PC-3 (cell line): ENCODE measurements at regions of chr5 and their contacts with region 1.

Region 1: GRCh38 chr5:104265531-104266140 is 703.0 kb upstream of the NUDT12 start:
- DNase-seq: no peak
- ATAC-seq: peak; percentile 18; the same call in 1 of the 2 replicates
- H3K4me3 ChIP-seq: no peak overlapping the region
- H3K27ac ChIP-seq: no peak overlapping the region
- H3K4me1 ChIP-seq: no peaks in the 10 kb centered on the region
- H3K27me3 ChIP-seq: no peaks in the 10 kb centered on the region
- CTCF ChIP-seq: no peak

Region 2: DNA sequence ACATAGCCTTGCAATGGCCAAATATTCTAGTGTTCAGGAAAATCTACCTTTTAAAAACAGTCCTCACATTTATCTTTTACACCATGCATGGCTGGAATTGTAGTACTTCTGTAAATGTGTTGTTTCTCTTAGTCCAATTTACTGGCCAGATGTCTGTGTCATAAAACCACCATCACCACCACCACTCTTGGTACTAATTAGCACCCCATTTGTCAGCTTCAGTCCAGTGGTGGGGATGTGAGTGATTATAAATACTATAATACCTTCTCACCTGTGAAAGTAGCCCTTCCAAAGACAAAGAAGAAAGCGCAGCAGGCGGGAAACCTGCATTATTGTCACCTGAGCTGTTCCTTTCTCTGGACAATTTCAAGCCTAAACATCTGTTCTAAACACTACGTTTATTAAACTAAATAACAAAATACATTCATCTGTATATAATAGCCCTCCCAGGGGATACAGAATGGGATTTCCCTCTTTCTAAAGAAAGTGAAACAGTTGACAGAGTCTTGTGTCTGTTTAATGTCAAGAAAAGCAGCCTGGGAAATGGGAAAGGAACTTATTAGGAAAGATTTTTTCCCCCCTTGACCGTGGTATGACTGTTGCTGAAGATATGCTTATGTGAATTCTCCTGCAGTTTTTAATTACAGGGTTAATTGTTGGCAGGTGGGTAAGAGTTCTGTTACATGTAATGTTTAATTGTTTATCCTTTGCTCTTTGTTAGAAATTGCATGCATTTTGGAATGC is 558.5 kb before region 1 on chr5:
- CTCF ChIA-PET with region 1: no interaction called
- POLR2A ChIA-PET with region 1: no interaction called
- intact Hi-C with region 1: no loop called
- DNase-seq: no peak
- ATAC-seq: no peak
- H3K4me3 ChIP-seq: no peak overlapping the region
- H3K27ac ChIP-seq: no peak overlapping the region
- H3K4me1 ChIP-seq: peaks cover 13% of the 10 kb centered on the region; the same call in 1 of the 2 replicates
- H3K27me3 ChIP-seq: no peaks in the 10 kb centered on the region
- CTCF ChIP-seq: no peak

Region 3: DNA sequence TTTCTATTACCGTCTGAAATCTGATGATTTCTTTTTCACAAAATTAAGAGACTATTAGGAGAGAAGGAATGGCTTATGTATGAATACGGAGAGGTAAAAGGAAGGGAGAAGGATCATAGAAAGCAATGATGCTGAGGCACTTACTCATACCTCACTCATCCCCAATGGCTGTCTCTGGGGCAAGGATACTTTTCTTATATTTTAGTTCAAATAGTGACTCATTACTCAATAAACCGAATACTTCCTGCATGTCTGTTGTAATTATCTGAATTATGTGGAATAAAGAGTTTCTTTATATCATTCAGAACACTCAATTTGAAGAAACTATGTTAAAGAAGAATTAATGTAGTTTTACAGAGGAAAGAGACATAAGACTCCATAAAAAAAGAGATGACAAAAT is 418.6 kb before region 1 on chr5:
- CTCF ChIA-PET with region 1: no interaction called
- POLR2A ChIA-PET with region 1: no interaction called
- intact Hi-C with region 1: no loop called
- DNase-seq: peak; percentile 92
- ATAC-seq: peak; percentile 87
- H3K4me3 ChIP-seq: peak overlapping the region; percentile 12; the same call in 1 of the 2 replicates
- H3K27ac ChIP-seq: peak overlapping the region; percentile 84
- H3K4me1 ChIP-seq: peaks cover 57% of the 10 kb centered on the region
- H3K27me3 ChIP-seq: no peaks in the 10 kb centered on the region
- CTCF ChIP-seq: no peak

Region 4: DNA sequence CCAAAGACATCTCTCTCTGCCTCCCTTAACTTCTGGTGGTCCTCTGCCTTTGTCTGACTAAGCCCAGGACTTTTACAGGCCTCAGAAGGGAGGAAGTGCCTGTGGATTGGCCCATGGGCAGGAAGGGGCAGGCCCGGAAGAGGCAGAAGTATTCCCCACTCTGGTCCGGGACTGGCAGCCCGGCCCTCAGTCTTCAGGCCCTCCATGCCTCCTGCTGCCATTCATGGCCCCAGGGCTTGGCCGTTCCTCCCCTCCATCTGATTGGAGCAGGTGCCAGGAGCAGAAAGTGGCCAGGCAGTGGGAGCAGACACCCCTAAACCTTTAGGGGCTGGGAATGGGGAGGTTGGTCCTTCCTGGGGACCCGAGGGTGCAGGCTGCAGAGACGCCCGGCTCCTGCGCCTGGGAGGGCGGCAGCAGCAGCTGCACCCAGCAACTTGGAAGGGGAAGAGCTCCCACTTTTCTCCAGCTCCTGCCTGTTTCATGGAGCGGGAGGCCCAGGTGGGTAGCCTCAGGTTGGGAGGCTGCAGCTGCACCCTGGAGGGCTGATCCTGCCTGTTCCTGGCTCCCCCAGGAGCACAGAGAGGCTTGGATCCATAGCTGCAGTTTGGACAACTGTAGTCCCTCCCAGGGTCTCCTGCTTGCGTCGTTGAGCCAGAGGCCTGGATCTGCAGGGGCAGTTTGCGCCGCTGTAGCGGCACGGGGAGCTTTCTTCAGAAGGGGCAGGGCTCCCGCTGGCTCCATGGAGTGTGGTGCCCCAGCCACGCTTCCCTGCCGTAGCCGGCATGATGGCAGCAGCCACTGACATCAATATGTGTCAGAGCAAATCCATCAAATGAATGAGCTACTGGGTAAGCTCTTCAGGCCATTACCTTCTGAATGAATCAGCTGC is 41.5 kb before region 1 on chr5:
- CTCF ChIA-PET with region 1: no interaction called
- POLR2A ChIA-PET with region 1: interaction called, 27 read pairs
- intact Hi-C with region 1: no loop called
- DNase-seq: no peak
- ATAC-seq: no peak
- H3K4me3 ChIP-seq: no peak overlapping the region
- H3K27ac ChIP-seq: no peak overlapping the region
- H3K4me1 ChIP-seq: no peaks in the 10 kb centered on the region
- H3K27me3 ChIP-seq: no peaks in the 10 kb centered on the region
- CTCF ChIP-seq: no peak